A673 (cell line): ENCODE measurements at regions of chr1 and their contacts with region 1.

Region 1: GRCh38 chr1:209850342-209850979 is 22.7 kb downstream of the UTP25 start:
- DNase-seq: peak; percentile 96
- H3K4me3 ChIP-seq: no peak overlapping the region
- H3K27ac ChIP-seq: peak overlapping the region; percentile 17
- H3K4me1 ChIP-seq: peaks cover 19% of the 10 kb centered on the region
- H3K27me3 ChIP-seq: no peaks in the 10 kb centered on the region
- CTCF ChIP-seq: peak; percentile 96

Region 2: GRCh38 chr1:210143465-210144062 is 293.1 kb after region 1 on chr1:
- CTCF ChIA-PET with region 1: no interaction called
- POLR2A ChIA-PET with region 1: no interaction called
- intact Hi-C with region 1: loop called (anchors 5 kb)
- DNase-seq: peak; percentile 85
- H3K4me3 ChIP-seq: no peak overlapping the region
- H3K27ac ChIP-seq: no peak overlapping the region
- H3K4me1 ChIP-seq: no peaks in the 10 kb centered on the region
- H3K27me3 ChIP-seq: no peaks in the 10 kb centered on the region
- CTCF ChIP-seq: peak; percentile 83